MCF 10A (cell line): ENCODE measurements at regions of chr1 and their contacts with region 1.

Region 1: DNA sequence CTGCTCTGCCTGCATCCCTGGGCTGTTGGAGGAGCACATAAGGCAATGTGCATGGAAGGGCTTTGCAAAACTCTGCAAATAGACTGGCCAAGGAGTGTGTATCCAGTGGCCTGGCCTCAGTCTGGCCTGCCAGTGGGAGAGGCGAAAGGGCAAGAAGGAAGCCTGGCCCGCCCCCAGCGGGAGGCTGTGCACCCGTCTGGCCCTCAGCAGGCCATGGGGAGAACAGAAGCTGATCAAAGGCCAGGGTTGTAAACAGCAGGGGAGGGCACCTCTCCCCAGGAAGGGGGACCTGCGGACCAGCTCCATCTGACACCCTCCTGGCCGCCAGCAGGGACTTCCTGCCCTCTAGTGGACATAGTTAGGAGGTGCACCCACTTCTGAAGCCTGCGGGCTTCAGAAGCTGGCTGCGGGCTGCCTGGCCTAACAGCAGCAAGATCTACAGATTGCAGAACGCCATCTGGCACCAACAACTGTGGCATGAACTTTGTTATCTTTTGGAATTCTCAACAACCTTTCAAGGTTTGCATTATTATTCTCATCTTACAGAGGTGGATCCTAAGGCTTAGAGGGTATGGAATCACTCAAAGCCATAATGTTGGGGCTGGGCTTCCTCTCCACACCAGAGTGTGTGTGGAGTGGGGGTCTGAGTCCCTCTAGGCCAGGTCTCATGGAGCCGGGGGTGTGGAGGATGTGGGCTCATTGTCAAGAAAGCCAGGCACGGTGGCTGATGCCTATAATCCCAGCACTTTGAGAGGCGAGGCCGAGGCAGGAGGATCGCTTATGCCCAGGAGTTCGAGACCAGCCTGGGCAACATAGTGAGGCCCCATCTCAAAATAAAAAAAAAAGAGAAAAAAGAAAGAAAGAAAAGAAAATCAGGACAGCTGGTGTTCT is 18.9 kb upstream of the CDK18 start:
- DNase-seq: peak; percentile 88
- H3K4me3 Mint-ChIP-seq: no peak overlapping the region
- H3K27ac Mint-ChIP-seq: no peak overlapping the region
- H3K4me1 Mint-ChIP-seq: peaks cover 14% of the 10 kb centered on the region
- H3K27me3 Mint-ChIP-seq: peaks cover 42% of the 10 kb centered on the region
- CTCF ChIP-seq: peak; percentile 100

Region 2: DNA sequence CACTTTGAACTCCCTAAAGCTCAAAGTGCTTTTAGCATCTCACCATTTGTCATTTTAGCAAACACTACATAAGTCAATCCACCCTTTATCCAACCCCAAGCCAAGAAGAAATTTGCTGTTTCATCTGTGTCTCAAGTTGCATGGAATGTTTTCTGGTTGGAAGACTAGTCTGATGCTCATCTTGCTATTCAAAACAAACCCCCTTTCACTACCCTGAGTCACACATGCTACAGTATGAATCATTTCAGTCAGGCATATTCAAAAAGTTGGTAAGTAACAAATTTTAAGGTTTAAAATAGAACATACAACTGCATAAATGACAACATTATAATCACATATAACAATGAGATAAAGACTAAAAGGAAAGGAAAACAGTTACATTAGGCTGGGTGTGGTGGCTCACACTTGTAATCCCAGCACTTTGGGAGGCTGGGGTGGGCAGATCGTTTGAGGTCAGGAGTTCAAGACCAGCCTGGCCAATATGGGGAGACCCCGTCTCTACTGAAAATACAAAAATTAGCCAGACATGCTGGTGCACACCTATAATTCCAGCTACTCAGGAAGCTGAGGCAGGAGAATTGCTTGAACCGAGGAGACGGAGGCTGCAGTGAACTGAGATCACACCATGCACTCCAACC is 312.7 kb before region 1 on chr1:
- CTCF ChIA-PET with region 1: no interaction called
- POLR2A ChIA-PET with region 1: no interaction called
- intact Hi-C with region 1: no loop called
- DNase-seq: peak; percentile 93
- H3K4me3 Mint-ChIP-seq: no peak overlapping the region
- H3K27ac Mint-ChIP-seq: peak overlapping the region; percentile 95
- H3K4me1 Mint-ChIP-seq: peaks cover 15% of the 10 kb centered on the region
- H3K27me3 Mint-ChIP-seq: no peaks in the 10 kb centered on the region
- CTCF ChIP-seq: no peak

Region 3: GRCh38 chr1:205211169-205211838 is 274.3 kb before region 1 on chr1 and contains the start of gene DSTYK:
- CTCF ChIA-PET with region 1: no interaction called
- POLR2A ChIA-PET with region 1: no interaction called
- intact Hi-C with region 1: no loop called
- DNase-seq: peak; percentile 99
- H3K4me3 Mint-ChIP-seq: peak within 1 kb of the TSS; percentile 73
- H3K27ac Mint-ChIP-seq: peak within 1 kb of the TSS; percentile 94
- H3K4me1 Mint-ChIP-seq: peaks cover 12% of the 10 kb centered on the region
- H3K27me3 Mint-ChIP-seq: peaks cover 12% of the 10 kb centered on the region
- CTCF ChIP-seq: no peak
- total RNA-seq, gene DSTYK: 18.4 and 21.5 TPM in 2 replicates

Region 4: GRCh38 chr1:205335643-205336091 is 149.9 kb before region 1 on chr1:
- CTCF ChIA-PET with region 1: interaction called, 141 read pairs
- POLR2A ChIA-PET with region 1: interaction called, 4 read pairs
- intact Hi-C with region 1: loop called (anchors 1 kb)
- DNase-seq: peak; percentile 97
- H3K4me3 Mint-ChIP-seq: no peak overlapping the region
- H3K27ac Mint-ChIP-seq: no peak overlapping the region
- H3K4me1 Mint-ChIP-seq: peaks cover 4% of the 10 kb centered on the region
- H3K27me3 Mint-ChIP-seq: peaks cover 17% of the 10 kb centered on the region
- CTCF ChIP-seq: peak; percentile 100

Region 5: DNA sequence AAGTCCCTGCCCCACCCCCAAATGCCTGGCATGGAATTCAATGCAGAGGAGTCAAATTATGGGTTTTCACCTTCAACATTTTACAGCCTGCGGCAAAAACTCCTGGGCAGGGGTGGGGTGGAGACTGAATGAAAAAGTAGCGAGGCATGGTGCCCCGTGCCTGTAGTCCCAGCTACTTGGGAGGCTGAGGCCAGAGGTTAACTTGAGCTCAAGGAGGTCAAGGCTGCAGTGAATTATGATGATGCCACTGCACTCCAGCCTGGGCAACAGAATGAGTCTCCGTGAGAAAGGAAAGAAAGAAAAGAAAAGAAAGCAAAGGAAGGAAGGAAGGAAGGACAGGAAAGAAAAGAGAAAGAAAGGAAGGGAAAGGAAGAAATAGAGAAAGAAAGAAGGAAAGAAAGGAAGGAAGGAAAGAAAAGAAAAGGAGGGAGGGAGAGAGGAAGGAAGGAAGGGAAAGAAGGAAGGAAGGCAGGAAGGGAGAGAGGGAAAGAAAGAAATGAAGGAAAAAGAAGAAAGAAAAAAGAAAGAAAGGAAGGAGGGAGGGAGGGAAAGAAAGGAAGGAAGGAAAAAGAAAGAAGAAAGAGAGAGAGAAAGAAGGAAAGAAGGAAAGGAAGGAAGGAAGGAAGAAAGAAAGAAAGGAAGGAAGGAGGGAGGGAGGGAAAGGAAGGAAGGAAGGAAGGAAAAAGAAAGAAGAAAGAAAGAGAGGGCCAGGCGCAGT is 74.8 kb before region 1 on chr1:
- CTCF ChIA-PET with region 1: interaction called, 296 read pairs
- POLR2A ChIA-PET with region 1: no interaction called
- intact Hi-C with region 1: no loop called
- DNase-seq: no peak
- H3K4me3 Mint-ChIP-seq: no peak overlapping the region
- H3K27ac Mint-ChIP-seq: no peak overlapping the region
- H3K4me1 Mint-ChIP-seq: no peaks in the 10 kb centered on the region
- H3K27me3 Mint-ChIP-seq: peaks cover 52% of the 10 kb centered on the region
- CTCF ChIP-seq: no peak

Region 6: GRCh38 chr1:205440476-205441317 is 44.9 kb before region 1 on chr1:
- CTCF ChIA-PET with region 1: interaction called, 110 read pairs
- POLR2A ChIA-PET with region 1: interaction called, 5 read pairs
- intact Hi-C with region 1: no loop called
- DNase-seq: peak; percentile 93
- H3K4me3 Mint-ChIP-seq: peak overlapping the region; percentile 1
- H3K27ac Mint-ChIP-seq: peak overlapping the region; percentile 77
- H3K4me1 Mint-ChIP-seq: peaks cover 25% of the 10 kb centered on the region
- H3K27me3 Mint-ChIP-seq: no peaks in the 10 kb centered on the region
- CTCF ChIP-seq: no peak

Region 7: DNA sequence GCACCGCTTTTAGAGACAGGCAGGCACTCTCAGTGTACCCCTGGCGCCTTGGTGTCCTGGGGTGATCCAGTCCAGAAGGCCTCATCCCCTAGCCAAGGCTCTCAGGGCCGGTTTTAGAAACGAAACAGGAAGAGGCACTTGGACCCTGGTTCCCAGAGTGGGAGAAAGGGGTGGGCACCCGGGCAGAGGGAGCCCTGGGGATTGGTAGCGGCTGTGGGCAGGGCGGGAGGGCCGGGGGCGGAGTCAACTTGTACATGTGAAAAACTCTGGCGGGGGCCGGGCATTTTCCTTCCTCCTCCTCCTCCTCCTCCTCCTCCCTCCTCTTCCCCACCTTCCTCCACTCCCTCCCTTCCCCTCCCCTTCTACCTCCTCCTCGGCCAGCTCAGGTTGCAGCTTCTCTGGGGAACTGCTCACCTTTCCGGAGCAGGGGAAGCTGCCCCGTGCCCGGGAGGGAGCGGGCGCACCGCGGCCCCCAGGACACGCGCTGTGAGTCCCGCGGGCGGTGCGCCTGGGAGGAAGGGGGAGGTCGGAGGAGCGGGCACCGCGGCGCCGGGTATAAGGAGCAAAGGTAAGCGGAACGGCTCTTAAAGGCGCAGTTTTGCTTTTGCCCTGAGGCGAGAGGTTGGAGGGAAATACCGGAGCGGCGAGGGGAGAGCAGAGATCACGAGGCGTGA is 18.9 kb after region 1 on chr1 and contains the start of gene CDK18:
- CTCF ChIA-PET with region 1: interaction called, 189 read pairs
- POLR2A ChIA-PET with region 1: interaction called, 73 read pairs
- intact Hi-C with region 1: no loop called
- DNase-seq: peak; percentile 95
- H3K4me3 Mint-ChIP-seq: peak within 1 kb of the TSS; percentile 89
- H3K27ac Mint-ChIP-seq: peak within 1 kb of the TSS; percentile 87
- H3K4me1 Mint-ChIP-seq: peaks cover 32% of the 10 kb centered on the region
- H3K27me3 Mint-ChIP-seq: no peaks in the 10 kb centered on the region
- CTCF ChIP-seq: no peak
- total RNA-seq, gene CDK18: 4.9 and 6.8 TPM in 2 replicates

Region 8: GRCh38 chr1:205645519-205645918 is 159.9 kb after region 1 on chr1:
- CTCF ChIA-PET with region 1: interaction called, 11 read pairs
- POLR2A ChIA-PET with region 1: no interaction called
- intact Hi-C with region 1: no loop called
- DNase-seq: no peak
- H3K4me3 Mint-ChIP-seq: no peak overlapping the region
- H3K27ac Mint-ChIP-seq: no peak overlapping the region
- H3K4me1 Mint-ChIP-seq: no peaks in the 10 kb centered on the region
- H3K27me3 Mint-ChIP-seq: no peaks in the 10 kb centered on the region
- CTCF ChIP-seq: no peak